GM18951 (cell line): ENCODE measurements at regions of chr4 and their contacts with region 1.

Region 1: GRCh38 chr4:173013232-173013930 is 155.2 kb upstream of the GALNT7 start:
- POLR2A ChIP-seq: no peak

Region 2: DNA sequence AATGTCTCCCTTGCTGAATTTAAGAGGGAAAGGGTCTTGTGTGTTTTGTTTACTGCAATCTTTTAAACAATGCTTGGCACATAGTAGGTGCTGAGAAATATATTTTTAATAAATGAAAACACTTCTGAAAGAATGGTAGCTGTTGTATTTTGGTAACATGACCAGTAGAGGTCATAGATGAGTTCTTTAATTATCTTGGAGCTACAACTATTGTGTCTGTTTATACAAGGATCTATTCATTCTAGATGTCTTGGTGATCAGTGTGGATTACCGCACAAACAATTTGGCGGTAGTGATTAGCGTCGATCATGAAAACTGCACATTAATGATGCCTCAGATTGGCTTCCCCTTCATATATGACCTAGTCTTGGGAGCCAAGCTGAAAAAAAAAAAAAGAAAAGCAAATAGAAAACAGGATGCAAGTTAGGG is 407.0 kb after region 1 on chr4:
- in situ Hi-C with region 1: loop called (anchors 10 kb)
- POLR2A ChIP-seq: no peak